Activated CD4-positive, alpha-beta memory T cell treated with anti-CD3 and anti-CD28 coated beads, Interleukin-2, amount 10 ng/mL, durations not matched to agents 7 days and 5 days (primary cell): ENCODE measurements at regions of chr11 and their contacts with region 1.

Region 1: GRCh38 chr11:6619004-6619745 is at the start of gene TPP1:
- DNase-seq: peak; percentile 92
- H3K4me3 Mint-ChIP-seq: no peak within 1 kb of the TSS
- H3K27ac Mint-ChIP-seq: no peak within 1 kb of the TSS
- H3K4me1 Mint-ChIP-seq: peaks cover 6% of the 10 kb centered on the region
- H3K27me3 Mint-ChIP-seq: no peaks in the 10 kb centered on the region
- total RNA-seq, gene TPP1: 130 to 131 TPM

Region 2: GRCh38 chr11:6419009-6419631 is 200.1 kb before region 1 on chr11 and contains the start of gene APBB1:
- CTCF ChIA-PET with region 1: no interaction called
- POLR2A ChIA-PET with region 1: interaction called, 10 read pairs
- DNase-seq: peak; percentile 78
- H3K4me3 Mint-ChIP-seq: peak within 1 kb of the TSS; percentile 75
- H3K27ac Mint-ChIP-seq: peak within 1 kb of the TSS; percentile 17
- H3K4me1 Mint-ChIP-seq: peaks cover 4% of the 10 kb centered on the region
- H3K27me3 Mint-ChIP-seq: peaks cover 28% of the 10 kb centered on the region
- total RNA-seq, gene APBB1: 56.0 to 57.6 TPM

Region 3: GRCh38 chr11:6586434-6587359 is 32.5 kb before region 1 on chr11:
- CTCF ChIA-PET with region 1: no interaction called
- POLR2A ChIA-PET with region 1: no interaction called
- DNase-seq: no peak
- H3K4me3 Mint-ChIP-seq: no peak overlapping the region
- H3K27ac Mint-ChIP-seq: no peak overlapping the region
- H3K4me1 Mint-ChIP-seq: no peaks in the 10 kb centered on the region
- H3K27me3 Mint-ChIP-seq: no peaks in the 10 kb centered on the region

Region 4: GRCh38 chr11:6646918-6647679 is 27.9 kb after region 1 on chr11:
- CTCF ChIA-PET with region 1: interaction called, 3 read pairs
- POLR2A ChIA-PET with region 1: interaction called, 20 read pairs
- DNase-seq: peak; percentile 36
- H3K4me3 Mint-ChIP-seq: no peak overlapping the region
- H3K27ac Mint-ChIP-seq: no peak overlapping the region
- H3K4me1 Mint-ChIP-seq: no peaks in the 10 kb centered on the region
- H3K27me3 Mint-ChIP-seq: no peaks in the 10 kb centered on the region

Region 5: DNA sequence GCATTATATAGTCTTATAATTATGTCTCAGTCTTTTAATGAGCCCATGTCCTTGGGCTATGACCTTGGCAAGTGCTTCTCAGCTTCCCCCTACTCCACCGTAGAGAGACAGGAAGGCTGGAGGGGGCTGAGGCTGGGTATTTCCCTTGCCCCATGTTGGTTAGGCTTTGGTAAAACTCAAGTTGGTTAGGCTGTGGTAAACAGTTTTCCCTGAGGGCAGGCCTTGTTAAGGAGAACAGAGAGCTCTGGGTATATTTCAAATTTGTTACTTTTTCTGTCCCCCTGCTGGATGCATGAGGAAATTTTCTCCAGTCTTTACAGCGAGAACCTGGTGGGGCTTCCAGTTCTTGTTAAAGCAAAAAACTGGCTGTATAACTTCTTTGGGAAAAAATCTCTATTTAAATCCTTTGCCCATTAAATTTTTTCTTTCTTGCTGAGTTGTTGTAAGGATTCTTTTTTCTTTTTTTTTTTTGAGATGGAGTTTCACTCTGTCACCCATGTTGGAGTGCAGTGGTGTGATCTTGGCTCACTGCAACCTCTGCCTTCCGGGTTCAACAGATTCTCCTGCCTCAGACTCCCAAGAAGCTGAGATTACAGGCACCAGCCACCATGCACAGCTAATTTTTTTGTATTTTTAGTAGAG is 48.7 kb after region 1 on chr11:
- CTCF ChIA-PET with region 1: interaction called, 36 read pairs
- POLR2A ChIA-PET with region 1: interaction called, 13 read pairs
- DNase-seq: peak; percentile 57
- H3K4me3 Mint-ChIP-seq: no peak overlapping the region
- H3K27ac Mint-ChIP-seq: peak overlapping the region; percentile 2
- H3K4me1 Mint-ChIP-seq: peaks cover 59% of the 10 kb centered on the region
- H3K27me3 Mint-ChIP-seq: peaks cover 6% of the 10 kb centered on the region

Region 6: DNA sequence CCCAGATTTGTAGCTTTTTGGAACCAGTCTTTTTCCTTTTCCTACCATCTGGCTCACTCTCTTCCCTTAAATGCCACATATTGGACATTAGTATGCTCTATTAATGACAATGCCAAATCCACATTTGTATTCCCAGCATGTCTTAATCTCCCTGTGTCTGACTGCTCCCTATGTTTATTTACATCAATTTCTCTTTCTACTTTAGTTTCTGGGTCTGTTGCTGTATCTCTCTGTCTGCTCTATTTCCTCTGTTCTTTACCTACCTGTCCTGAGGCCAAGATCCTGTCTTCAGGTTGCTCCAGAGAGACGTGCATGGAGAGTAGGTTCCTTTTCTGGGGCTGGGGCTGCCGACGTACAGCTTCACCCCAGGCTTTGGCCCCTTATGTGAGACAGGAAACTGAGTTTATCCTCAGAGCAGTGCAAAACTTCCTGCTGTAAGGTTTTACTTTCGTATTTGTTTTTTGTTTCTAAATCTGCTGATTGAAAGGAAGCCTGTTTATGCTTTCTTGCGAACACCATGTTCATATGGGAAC is 127.0 kb after region 1 on chr11:
- CTCF ChIA-PET with region 1: interaction called, 4 read pairs
- POLR2A ChIA-PET with region 1: interaction called, 23 read pairs
- DNase-seq: peak; percentile 55
- H3K4me3 Mint-ChIP-seq: no peak overlapping the region
- H3K27ac Mint-ChIP-seq: no peak overlapping the region
- H3K4me1 Mint-ChIP-seq: peaks cover 26% of the 10 kb centered on the region
- H3K27me3 Mint-ChIP-seq: no peaks in the 10 kb centered on the region

Region 7: GRCh38 chr11:7278314-7278917 is 659.2 kb after region 1 on chr11:
- CTCF ChIA-PET with region 1: no interaction called
- POLR2A ChIA-PET with region 1: no interaction called
- DNase-seq: peak; percentile 17
- H3K4me3 Mint-ChIP-seq: no peak overlapping the region
- H3K27ac Mint-ChIP-seq: no peak overlapping the region
- H3K4me1 Mint-ChIP-seq: no peaks in the 10 kb centered on the region
- H3K27me3 Mint-ChIP-seq: no peaks in the 10 kb centered on the region